HEK293T (cell line): ENCODE measurements at regions of chr20 and their contacts with region 1.

Region 1: GRCh38 chr20:2523919-2524708 is 12.3 kb upstream of the TMC2 start:
- DNase-seq: peak; percentile 83

Region 2: GRCh38 chr20:2508631-2509467 is 15.3 kb before region 1 on chr20 and contains the start of gene ZNF343:
- CTCF ChIA-PET with region 1: interaction called, 12 read pairs
- POLR2A ChIA-PET with region 1: interaction called, 9 read pairs
- DNase-seq: peak; percentile 88